H1 (cell line): ENCODE measurements at regions of chr1 and their contacts with region 1.

Region 1: DNA sequence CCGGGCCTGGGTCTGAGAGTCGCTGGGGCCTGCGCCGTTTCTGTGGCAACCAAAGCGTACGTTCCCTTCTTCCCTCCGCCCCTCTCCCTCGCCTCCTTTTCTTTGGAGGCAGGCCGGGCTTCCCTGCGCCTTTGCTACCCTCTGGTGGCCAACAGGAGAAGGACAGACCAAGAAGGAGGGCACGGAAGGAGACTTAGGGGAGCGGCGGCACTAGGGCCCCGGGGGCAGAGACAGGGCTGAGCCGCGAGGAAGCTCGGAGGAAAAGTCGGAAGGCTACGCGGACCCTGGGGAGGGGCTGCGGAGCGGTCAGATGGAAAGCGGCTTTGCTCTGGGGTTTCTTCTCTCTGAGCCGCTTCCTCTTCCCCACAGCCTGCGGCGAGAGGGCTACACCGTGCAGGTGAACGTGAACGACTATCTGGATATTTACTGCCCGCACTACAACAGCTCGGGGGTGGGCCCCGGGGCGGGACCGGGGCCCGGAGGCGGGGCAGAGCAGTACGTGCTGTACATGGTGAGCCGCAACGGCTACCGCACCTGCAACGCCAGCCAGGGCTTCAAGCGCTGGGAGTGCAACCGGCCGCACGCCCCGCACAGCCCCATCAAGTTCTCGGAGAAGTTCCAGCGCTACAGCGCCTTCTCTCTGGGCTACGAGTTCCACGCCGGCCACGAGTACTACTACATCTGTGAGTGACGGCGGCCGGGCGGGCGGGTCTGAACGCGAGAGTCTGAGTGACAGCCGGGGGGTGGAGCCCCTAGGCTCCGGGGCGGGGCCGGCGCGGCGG is 6.3 kb downstream of the EFNA3 start:
- DNase-seq: peak; percentile 89 to 96
- H3K4me3 ChIP-seq: peak overlapping the region; percentile 59 to 81 (median 77)
- H3K27ac ChIP-seq: no peak overlapping the region
- H3K4me1 ChIP-seq: peaks cover 0 to 45% (median 23%) of the 10 kb centered on the region in 4 experiments; a peak in 6 of 7 replicates
- H3K27me3 ChIP-seq: peaks cover 36 to 46% (median 40%) of the 10 kb centered on the region in 4 experiments
- CTCF ChIP-seq: peak in 2 of 3 experiments; percentile 96 to 97; a peak in 3 of 4 replicates
- EP300 ChIP-seq: peak in 1 of 2 experiments; percentile 76; a peak in 1 of 3 replicates
- POLR2A ChIP-seq: 0 out of 3 replicates have a peak, but pooled peaks of 1 of the 2 experiments have one; percentile 18
- RAD21 ChIP-seq: peak; percentile 98 to 99

Region 2: GRCh38 chr1:154784924-154785531 is 299.9 kb before region 1 on chr1:
- CTCF ChIA-PET with region 1: no interaction called
- POLR2A ChIA-PET with region 1: no interaction called
- DNase-seq: no peak
- H3K4me3 ChIP-seq: no peak overlapping the region
- H3K27ac ChIP-seq: no peak overlapping the region
- H3K4me1 ChIP-seq: peaks cover 0 to 7% (median 3%) of the 10 kb centered on the region in 4 experiments; a peak in 3 of 7 replicates
- H3K27me3 ChIP-seq: no peaks in the 10 kb centered on the region
- CTCF ChIP-seq: no peak
- EP300 ChIP-seq: no peak
- POLR2A ChIP-seq: no peak
- RAD21 ChIP-seq: no peak

Region 3: DNA sequence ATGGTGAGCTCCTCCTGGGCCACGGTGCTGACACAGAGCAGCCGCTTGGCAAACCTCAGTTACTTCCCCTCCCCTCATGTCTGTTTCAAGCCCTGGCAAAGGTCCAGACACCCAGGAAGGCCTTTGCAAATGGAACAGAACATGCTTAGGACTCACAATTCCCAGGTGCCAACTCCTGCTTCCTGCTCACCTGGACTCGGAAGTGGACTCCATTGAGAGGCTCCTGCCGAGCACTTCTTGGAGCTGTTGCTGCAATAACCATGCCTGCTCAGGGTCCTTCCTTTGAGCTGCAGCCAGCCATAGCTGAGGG is 62.0 kb before region 1 on chr1:
- CTCF ChIA-PET with region 1: interaction called, 12 read pairs
- POLR2A ChIA-PET with region 1: no interaction called
- DNase-seq: no peak
- H3K4me3 ChIP-seq: no peak overlapping the region
- H3K27ac ChIP-seq: no peak overlapping the region
- H3K4me1 ChIP-seq: peaks cover 0 to 8% (median under 1%) of the 10 kb centered on the region in 4 experiments; a peak in 4 of 7 replicates
- H3K27me3 ChIP-seq: peaks cover 0 to 3% (median under 1%) of the 10 kb centered on the region in 4 experiments; a peak in 1 of 7 replicates
- CTCF ChIP-seq: no peak
- EP300 ChIP-seq: no peak
- POLR2A ChIP-seq: no peak
- RAD21 ChIP-seq: no peak

Region 4: GRCh38 chr1:155050560-155051341 is 34.2 kb before region 1 on chr1 and contains the start of gene ADAM15:
- CTCF ChIA-PET with region 1: interaction called, 907 read pairs
- POLR2A ChIA-PET with region 1: interaction called, 6 read pairs
- DNase-seq: peak in 1 of 2 experiments; percentile 95
- H3K4me3 ChIP-seq: peak within 1 kb of the TSS; percentile 32 to 76 (median 62)
- H3K27ac ChIP-seq: no peak within 1 kb of the TSS
- H3K4me1 ChIP-seq: peaks cover 4 to 28% (median 10%) of the 10 kb centered on the region in 4 experiments; a peak in 6 of 7 replicates
- H3K27me3 ChIP-seq: peaks cover 0 to 18% (median 12%) of the 10 kb centered on the region in 4 experiments; a peak in 5 of 7 replicates
- CTCF ChIP-seq: peak; percentile 94 to 98 (median 97)
- EP300 ChIP-seq: no peak
- POLR2A ChIP-seq: no peak
- RAD21 ChIP-seq: peak; percentile 51 to 65
- total RNA-seq, gene ADAM15: 32.2 and 32.9 TPM in 2 replicates

Region 5: GRCh38 chr1:155099331-155099730 is 14.4 kb after region 1 on chr1:
- CTCF ChIA-PET with region 1: interaction called, 20 read pairs
- POLR2A ChIA-PET with region 1: no interaction called
- DNase-seq: no peak
- H3K4me3 ChIP-seq: no peak overlapping the region
- H3K27ac ChIP-seq: no peak overlapping the region
- H3K4me1 ChIP-seq: no peaks in the 10 kb centered on the region; a peak in 1 of 7 replicates
- H3K27me3 ChIP-seq: no peaks in the 10 kb centered on the region
- CTCF ChIP-seq: no peak
- EP300 ChIP-seq: no peak
- POLR2A ChIP-seq: no peak
- RAD21 ChIP-seq: no peak

Region 6: GRCh38 chr1:155167166-155168104 is 82.5 kb after region 1 on chr1:
- CTCF ChIA-PET with region 1: interaction called, 215 read pairs
- POLR2A ChIA-PET with region 1: interaction called, 7 read pairs
- DNase-seq: peak in 1 of 2 experiments; percentile 96
- H3K4me3 ChIP-seq: peak overlapping the region; percentile 30 to 75 (median 72); a peak in 7 of 8 replicates
- H3K27ac ChIP-seq: no peak overlapping the region
- H3K4me1 ChIP-seq: peaks cover 5 to 19% (median 13%) of the 10 kb centered on the region in 4 experiments
- H3K27me3 ChIP-seq: no peaks in the 10 kb centered on the region
- CTCF ChIP-seq: peak in 2 of 3 experiments; percentile 98 to 99; a peak in 3 of 4 replicates
- EP300 ChIP-seq: no peak
- POLR2A ChIP-seq: no peak
- RAD21 ChIP-seq: peak; percentile 96 to 98